Cardiac septum (tissue), 1 donor: ENCODE measurements at regions of chr11 and their contacts with region 1.

Region 1: GRCh38 chr11:72238040-72238450 is 5.9 kb downstream of the PHOX2A start:
- DNase-seq: no peak

Region 2: DNA sequence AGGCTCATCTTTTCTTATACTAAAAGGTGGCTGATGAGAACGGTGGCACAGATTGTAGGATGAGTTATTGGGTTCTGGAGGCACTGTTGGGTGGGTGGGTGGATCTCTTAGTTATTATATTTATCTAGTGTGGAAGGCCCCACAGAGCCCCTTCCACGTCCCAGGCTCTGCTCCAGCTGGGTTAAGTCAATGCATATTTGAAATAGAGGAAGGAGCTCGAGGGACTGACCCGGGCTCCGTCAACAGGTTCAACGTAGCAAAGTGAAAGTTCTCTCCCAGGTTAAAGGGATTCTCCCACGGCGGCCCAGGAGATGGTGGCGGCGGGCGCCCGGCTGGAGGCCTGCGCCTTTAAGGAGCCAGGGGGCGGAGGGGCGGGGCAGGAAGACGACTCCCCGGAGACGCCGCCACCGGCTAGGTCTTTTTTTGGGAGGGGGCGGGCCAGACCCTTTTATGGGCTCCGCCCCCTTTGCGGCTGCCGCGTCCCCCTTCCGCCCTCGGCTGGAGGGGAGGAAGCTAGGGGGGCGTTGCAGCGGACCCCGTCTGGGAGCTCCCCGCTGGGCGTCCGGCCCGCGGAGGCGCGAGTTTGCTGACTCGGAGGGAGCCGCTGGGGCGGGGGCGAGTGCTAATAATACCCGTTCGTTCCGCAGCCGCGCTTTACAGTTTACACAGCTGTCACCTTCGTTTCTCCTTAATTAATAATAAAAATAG is 15.0 kb before region 1 on chr11:
- intact Hi-C with region 1: loop called (anchors 1 kb)
- DNase-seq: peak; percentile 97

Region 3: DNA sequence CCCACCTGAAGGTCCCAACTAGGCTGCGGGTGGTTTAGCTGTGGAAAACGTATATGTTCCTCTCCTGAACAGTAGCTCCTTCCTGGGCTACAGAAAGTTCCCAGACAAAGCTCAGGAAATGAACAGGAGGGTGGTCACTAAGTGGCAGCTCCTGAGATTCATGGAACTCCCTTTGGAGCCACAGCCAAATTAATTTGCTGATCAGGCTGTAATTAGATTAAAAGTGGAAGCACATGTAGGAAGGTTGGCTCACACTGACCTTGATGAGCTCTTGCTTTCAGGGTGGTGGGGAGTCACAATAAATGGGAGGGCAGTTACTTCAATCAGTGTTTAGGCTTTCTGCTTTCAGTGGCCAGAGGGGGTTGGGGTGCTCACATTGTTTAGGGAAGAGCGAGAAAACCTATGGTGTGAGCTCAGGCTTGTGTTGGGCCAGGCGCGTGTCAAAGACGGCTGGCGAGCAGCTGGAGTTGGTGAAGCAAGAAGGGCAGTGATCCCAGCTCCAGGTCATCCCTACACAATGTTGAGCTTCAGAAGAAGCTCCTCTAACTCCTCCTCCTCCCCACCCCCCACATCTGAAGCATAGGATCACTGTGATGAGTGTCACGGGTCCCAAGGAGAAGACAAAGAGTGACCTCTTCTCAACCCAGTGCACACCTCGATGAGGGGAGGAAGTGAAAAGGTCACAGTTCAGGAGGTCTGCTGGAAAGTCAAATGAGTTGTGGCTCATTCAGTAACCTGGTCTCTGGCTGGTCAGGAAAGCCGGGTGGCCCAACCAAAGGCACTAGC is 153.8 kb after region 1 on chr11:
- intact Hi-C with region 1: no loop called
- DNase-seq: no peak

Region 4: DNA sequence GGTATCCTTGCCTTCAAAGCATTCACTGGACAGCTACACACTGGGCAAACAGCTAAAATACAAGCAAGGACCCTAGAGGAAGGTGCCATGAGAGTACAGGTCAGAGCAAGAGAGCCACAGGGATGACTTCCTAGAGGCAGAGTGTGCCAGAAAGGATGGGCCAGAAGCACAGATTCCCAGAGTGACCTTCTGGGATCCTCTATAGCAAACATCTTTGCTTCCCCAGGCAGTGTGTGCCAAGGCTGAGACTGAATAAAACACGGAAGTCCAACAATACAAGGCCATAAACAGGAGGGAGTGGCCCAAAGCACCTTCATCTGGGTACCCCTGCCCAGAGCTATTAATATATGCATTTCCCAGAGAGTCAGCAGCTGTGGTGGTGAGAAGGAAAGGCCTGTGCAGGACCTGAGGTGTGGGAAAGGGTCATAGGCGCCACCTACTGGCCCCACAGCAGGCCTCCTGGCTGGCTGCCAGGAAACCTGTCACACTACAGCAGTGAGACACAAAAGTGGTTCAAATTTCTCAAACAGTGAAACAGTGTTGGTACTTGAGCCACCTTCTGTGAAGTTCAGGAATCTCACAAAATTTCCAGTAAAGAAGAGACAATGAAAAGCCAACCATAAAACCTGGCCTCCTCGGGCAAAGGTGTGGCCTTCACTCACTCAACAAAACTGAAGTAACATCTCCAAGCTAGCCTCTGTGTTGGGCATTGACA is 176.0 kb after region 1 on chr11:
- intact Hi-C with region 1: loop called (anchors 5 kb)
- DNase-seq: peak; percentile 92

Region 5: DNA sequence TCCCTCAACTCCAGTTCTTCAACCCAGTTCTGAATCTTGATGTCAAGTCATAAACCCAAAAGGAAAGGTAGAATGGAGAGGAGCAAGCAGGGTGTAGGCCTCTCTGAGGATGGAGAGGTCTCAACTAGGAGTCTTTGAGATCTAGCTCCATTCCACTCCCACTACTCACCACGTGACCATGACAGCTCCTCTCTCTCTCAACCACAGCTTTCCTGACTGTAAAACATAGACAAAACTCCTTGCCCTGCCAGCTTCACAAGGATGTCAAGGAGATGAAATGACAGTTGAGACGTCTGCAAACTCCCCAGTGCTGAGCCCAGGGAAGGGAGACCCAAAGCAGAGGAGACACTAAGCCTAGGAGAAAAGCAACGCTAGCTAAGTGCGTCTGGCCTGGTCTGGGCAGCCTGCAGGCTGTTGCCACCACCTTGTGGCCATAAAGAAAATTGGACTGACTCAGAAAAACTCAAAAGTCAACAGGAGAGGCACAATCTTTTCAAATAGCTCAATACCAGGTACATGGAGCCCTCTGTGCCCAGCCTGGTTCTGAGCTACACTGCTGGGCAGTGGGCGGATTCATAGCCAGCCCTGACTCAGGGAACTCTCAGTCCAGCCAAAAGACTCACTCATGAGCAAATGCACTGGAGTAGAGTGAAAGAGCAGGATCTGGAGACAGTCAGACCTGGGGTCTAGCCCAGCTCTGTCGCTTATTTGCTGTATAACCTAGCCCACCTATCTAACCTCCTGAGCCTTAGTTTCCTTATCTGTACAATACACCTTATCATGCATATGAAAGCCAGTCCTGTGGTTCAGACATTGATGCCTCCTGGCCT is 192.9 kb after region 1 on chr11:
- intact Hi-C with region 1: loop called (anchors 5 kb)
- DNase-seq: no peak